ENCODE measurements at regions of chr15 and their contacts with region 1.

Region 1: DNA sequence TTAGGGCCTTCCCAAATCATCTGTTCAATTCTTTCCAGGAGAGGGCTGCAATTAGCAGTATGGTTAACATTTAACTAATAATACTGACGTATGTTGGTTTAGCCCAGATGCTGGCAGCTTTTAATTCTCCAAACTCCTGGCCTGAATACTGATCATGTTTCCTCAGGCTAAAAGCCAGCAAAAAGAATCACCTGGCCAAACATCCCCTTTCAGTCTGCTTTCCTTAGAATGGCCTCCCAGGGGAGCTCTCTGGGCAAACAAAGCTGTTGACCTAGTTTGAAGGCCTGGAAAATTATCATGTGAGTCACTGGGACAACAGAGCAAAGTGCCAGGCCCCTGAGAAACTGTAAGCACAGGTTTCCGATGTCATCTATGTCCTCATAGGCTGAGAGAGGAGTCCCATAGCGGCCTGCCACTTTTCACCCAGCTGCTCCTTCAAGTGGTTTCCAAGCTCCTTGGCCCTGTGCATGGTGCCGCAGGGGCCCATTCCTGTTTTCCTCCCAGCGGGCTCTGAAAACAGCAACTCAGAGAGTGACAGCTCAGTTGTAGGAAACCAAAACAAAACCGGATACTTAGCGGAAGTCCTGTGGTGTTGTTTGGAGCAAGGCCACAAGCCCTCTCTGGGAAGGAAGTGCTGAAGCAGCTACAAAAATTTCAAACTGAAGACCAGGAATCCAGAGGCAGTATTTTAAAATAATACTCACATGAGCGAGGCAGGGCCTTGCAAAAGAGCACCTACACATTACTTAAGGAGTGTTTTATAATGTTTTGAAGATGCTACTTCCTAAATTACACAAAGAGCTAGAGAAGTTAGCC is 36.5 kb upstream of the RAB11A start:
- DNase-seq: peak; percentile 83
- ATAC-seq: peak; percentile 82
- H3K4me3 ChIP-seq: no peak overlapping the region
- H3K27ac ChIP-seq: peak overlapping the region; percentile 60
- H3K4me1 ChIP-seq: peaks cover 26 to 27% of the 10 kb centered on the region in 2 experiments
- H3K27me3 ChIP-seq: no peaks in the 10 kb centered on the region
- CTCF ChIP-seq: peak in 2 of 3 experiments; percentile 22 to 27; a peak in 3 of 6 replicates
- POLR2A ChIP-seq: no peak
- RAD21 ChIP-seq: peak; percentile 41

Region 2: GRCh38 chr15:65130941-65131340 is 701.8 kb before region 1 on chr15:
- CTCF ChIA-PET with region 1: no interaction called
- POLR2A ChIA-PET with region 1: no interaction called
- RAD21 ChIA-PET with region 1: no interaction called
- intact Hi-C with region 1: no loop called
- DNase-seq: no peak
- ATAC-seq: no peak
- H3K4me3 ChIP-seq: no peak overlapping the region
- H3K27ac ChIP-seq: no peak overlapping the region
- H3K4me1 ChIP-seq: peaks cover 7 to 13% of the 10 kb centered on the region in 2 experiments; a peak in 3 of 4 replicates
- H3K27me3 ChIP-seq: no peaks in the 10 kb centered on the region
- CTCF ChIP-seq: no peak
- POLR2A ChIP-seq: no peak
- RAD21 ChIP-seq: no peak

Region 3: GRCh38 chr15:65318870-65319356 is 513.8 kb before region 1 on chr15:
- CTCF ChIA-PET with region 1: no interaction called
- POLR2A ChIA-PET with region 1: no interaction called
- RAD21 ChIA-PET with region 1: no interaction called
- intact Hi-C with region 1: loop called (anchors 10 kb)
- DNase-seq: peak; percentile 66
- ATAC-seq: peak; percentile 99
- H3K4me3 ChIP-seq: no peak overlapping the region
- H3K27ac ChIP-seq: no peak overlapping the region
- H3K4me1 ChIP-seq: no peaks in the 10 kb centered on the region
- H3K27me3 ChIP-seq: no peaks in the 10 kb centered on the region
- CTCF ChIP-seq: peak; percentile 77 to 96 (median 92)
- POLR2A ChIP-seq: no peak
- RAD21 ChIP-seq: peak; percentile 98

Region 4: DNA sequence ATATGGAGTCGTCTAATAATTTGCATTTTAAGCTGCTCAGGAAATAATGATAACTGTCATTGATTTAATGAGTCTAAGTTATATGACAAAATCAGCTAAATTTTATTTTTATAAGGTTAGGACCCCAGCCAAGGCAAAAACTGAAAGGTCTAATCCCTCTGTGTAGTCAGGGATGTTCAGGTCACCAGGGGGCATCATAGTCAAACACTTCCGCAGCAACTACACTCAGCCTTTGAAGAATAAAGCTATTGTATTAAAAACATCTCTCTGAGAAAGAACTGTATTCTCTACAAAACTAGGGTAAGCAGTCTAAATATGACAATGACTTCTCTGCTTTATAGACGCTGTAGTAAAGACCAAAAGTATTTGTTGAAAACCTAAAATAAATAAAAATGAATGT is 236.8 kb before region 1 on chr15:
- CTCF ChIA-PET with region 1: interaction called, 6 read pairs
- POLR2A ChIA-PET with region 1: no interaction called
- RAD21 ChIA-PET with region 1: no interaction called
- intact Hi-C with region 1: loop called (anchors 5 kb)
- DNase-seq: no peak
- ATAC-seq: peak; percentile 75
- H3K4me3 ChIP-seq: no peak overlapping the region
- H3K27ac ChIP-seq: no peak overlapping the region
- H3K4me1 ChIP-seq: no peaks in the 10 kb centered on the region
- H3K27me3 ChIP-seq: no peaks in the 10 kb centered on the region
- CTCF ChIP-seq: peak; percentile 36 to 53 (median 53); a peak in 5 of 6 replicates
- POLR2A ChIP-seq: no peak
- RAD21 ChIP-seq: peak; percentile 65

Region 5: GRCh38 chr15:65638681-65639089 is 194.1 kb before region 1 on chr15:
- CTCF ChIA-PET with region 1: interaction called, 11 read pairs
- POLR2A ChIA-PET with region 1: no interaction called
- RAD21 ChIA-PET with region 1: interaction called in 1 of 2 experiments, 3 read pairs
- intact Hi-C with region 1: no loop called
- DNase-seq: peak; percentile 65
- ATAC-seq: peak; percentile 93
- H3K4me3 ChIP-seq: no peak overlapping the region
- H3K27ac ChIP-seq: no peak overlapping the region
- H3K4me1 ChIP-seq: peaks cover 2 to 9% of the 10 kb centered on the region in 2 experiments; a peak in 3 of 4 replicates
- H3K27me3 ChIP-seq: no peaks in the 10 kb centered on the region
- CTCF ChIP-seq: peak; percentile 84 to 89 (median 89); a peak in 5 of 6 replicates
- POLR2A ChIP-seq: no peak
- RAD21 ChIP-seq: peak; percentile 89

Region 6: GRCh38 chr15:65856821-65857455 is 24.2 kb after region 1 on chr15:
- CTCF ChIA-PET with region 1: interaction called, 18 read pairs
- POLR2A ChIA-PET with region 1: interaction called, 3 read pairs
- RAD21 ChIA-PET with region 1: interaction called in 1 of 2 experiments, 3 read pairs
- intact Hi-C with region 1: no loop called
- DNase-seq: peak; percentile 59
- ATAC-seq: peak; percentile 92
- H3K4me3 ChIP-seq: no peak overlapping the region
- H3K27ac ChIP-seq: no peak overlapping the region
- H3K4me1 ChIP-seq: no peaks in the 10 kb centered on the region
- H3K27me3 ChIP-seq: no peaks in the 10 kb centered on the region
- CTCF ChIP-seq: peak; percentile 60 to 94 (median 92)
- POLR2A ChIP-seq: no peak
- RAD21 ChIP-seq: peak; percentile 40

Region 7: GRCh38 chr15:65862682-65863081 is 29.9 kb after region 1 on chr15:
- CTCF ChIA-PET with region 1: interaction called, 18 read pairs
- POLR2A ChIA-PET with region 1: interaction called, 6 read pairs
- RAD21 ChIA-PET with region 1: no interaction called
- intact Hi-C with region 1: no loop called
- DNase-seq: peak; percentile 90
- ATAC-seq: peak; percentile 99
- H3K4me3 ChIP-seq: no peak overlapping the region
- H3K27ac ChIP-seq: 0 out of 2 replicates have a peak overlapping the region, but pooled peaks have one; percentile 3
- H3K4me1 ChIP-seq: peaks cover 0 to 9% of the 10 kb centered on the region in 2 experiments; a peak in 3 of 4 replicates
- H3K27me3 ChIP-seq: no peaks in the 10 kb centered on the region
- CTCF ChIP-seq: peak; percentile 23 to 87 (median 78); a peak in 5 of 6 replicates
- POLR2A ChIP-seq: no peak
- RAD21 ChIP-seq: 0 out of 2 replicates have a peak, but pooled peaks have one; percentile 16